ENCODE measurements at regions of chr4 and their contacts with region 1.

Region 1: GRCh38 chr4:71553605-71554004 is 214.8 kb downstream of the SLC4A4 start:
- DNase-seq: peak; percentile 7 to 25 (median 16)
- ATAC-seq: peak; percentile 65; the same call in 2 of the 3 replicates
- H3K4me3 ChIP-seq: no peak overlapping the region
- H3K27ac ChIP-seq: no peak overlapping the region
- H3K4me1 ChIP-seq: no peaks in the 10 kb centered on the region
- H3K27me3 ChIP-seq: no peaks in the 10 kb centered on the region
- CTCF ChIP-seq: peak in 2 of 3 experiments; percentile 31 to 44; a peak in 3 of 6 replicates
- EP300 ChIP-seq: no peak
- POLR2A ChIP-seq: no peak
- RAD21 ChIP-seq: peak; percentile 57 to 63

Region 2: GRCh38 chr4:71270901-71271300 is 282.7 kb before region 1 on chr4:
- CTCF ChIA-PET with region 1: no interaction called
- POLR2A ChIA-PET with region 1: interaction called, 3 read pairs
- in situ Hi-C with region 1: no loop called
- intact Hi-C with region 1: loop called (anchors 1 kb)
- DNase-seq: peak; percentile 9 to 56 (median 12)
- ATAC-seq: peak; percentile 86
- H3K4me3 ChIP-seq: no peak overlapping the region
- H3K27ac ChIP-seq: no peak overlapping the region
- H3K4me1 ChIP-seq: no peaks in the 10 kb centered on the region
- H3K27me3 ChIP-seq: no peaks in the 10 kb centered on the region; a peak in 1 of 5 replicates
- CTCF ChIP-seq: peak; percentile 40 to 59 (median 51)
- EP300 ChIP-seq: no peak
- POLR2A ChIP-seq: no peak
- RAD21 ChIP-seq: peak; percentile 65 to 70

Region 3: DNA sequence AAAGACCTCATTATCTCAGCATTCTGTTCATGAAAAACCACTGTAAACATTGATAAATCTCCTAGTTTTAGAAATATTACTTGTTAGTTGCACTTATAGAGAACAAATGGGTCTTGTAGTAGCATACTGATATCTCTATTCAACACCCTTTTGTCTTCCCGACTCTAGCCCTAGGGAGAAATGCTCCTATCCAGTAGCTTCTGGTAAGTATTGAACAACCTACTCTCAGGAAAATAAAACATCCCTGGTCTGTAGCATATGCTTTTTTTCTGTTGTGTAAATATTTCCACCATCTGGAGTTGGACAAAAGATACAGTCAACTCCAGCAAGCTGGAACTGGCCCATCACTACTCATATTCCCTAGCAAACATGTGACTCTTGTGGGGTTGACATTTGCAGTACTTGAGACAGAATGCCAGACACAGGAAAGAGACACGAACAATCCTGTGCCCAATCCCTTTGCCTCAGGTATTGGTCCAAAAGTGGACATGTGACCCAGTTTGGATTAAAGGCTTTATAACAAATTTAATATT is 42.0 kb after region 1 on chr4:
- CTCF ChIA-PET with region 1: no interaction called
- POLR2A ChIA-PET with region 1: no interaction called
- in situ Hi-C with region 1: no loop called
- intact Hi-C with region 1: no loop called
- DNase-seq: no peak
- ATAC-seq: no peak
- H3K4me3 ChIP-seq: no peak overlapping the region
- H3K27ac ChIP-seq: no peak overlapping the region
- H3K4me1 ChIP-seq: no peaks in the 10 kb centered on the region
- H3K27me3 ChIP-seq: no peaks in the 10 kb centered on the region
- CTCF ChIP-seq: no peak
- EP300 ChIP-seq: no peak
- POLR2A ChIP-seq: no peak
- RAD21 ChIP-seq: no peak

Region 4: GRCh38 chr4:71974681-71975080 is 421.1 kb after region 1 on chr4:
- CTCF ChIA-PET with region 1: no interaction called
- POLR2A ChIA-PET with region 1: no interaction called
- in situ Hi-C with region 1: no loop called
- intact Hi-C with region 1: no loop called
- DNase-seq: no peak
- ATAC-seq: no peak
- H3K4me3 ChIP-seq: no peak overlapping the region
- H3K27ac ChIP-seq: no peak overlapping the region
- H3K4me1 ChIP-seq: no peaks in the 10 kb centered on the region
- H3K27me3 ChIP-seq: no peaks in the 10 kb centered on the region
- CTCF ChIP-seq: no peak
- EP300 ChIP-seq: no peak
- POLR2A ChIP-seq: no peak
- RAD21 ChIP-seq: no peak